CD8-positive, alpha-beta T cell (primary cell): ENCODE measurements at regions of chr19 and their contacts with region 1.

Region 1: DNA sequence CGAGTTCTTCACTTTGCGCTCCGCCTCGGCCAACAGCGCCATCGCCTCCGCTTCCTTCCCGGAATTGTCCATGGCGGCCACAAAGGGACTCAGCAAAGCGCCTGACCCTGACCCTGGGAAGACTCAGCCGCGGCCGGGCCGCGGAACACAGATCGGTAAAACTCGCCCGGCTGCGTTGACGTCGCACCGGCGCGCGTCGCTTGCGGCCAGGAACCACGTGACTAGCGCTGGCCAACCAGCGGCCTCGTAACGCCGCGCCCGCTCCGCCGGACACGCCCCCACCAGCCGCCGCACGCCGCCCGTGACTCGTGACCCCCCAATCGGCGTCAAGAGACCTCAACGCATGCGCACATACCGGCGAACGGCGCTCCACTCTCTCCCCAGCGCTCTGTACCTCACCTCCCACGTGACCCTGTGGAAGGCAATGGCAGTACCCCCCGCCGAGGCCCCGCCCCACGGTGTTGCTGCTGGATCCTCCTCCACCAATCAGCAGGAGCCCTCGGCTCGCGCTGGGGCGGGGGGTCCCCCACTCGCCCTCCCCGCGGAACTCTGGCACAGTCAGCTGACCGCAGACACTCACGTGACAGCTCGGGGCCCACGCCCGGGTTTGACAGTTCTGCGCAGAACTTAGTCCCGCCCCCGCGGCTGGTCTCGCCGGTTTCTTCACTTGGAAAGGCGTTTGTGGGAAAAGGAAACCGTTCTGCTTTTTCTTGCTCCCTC is at the start of gene NAPA:
- DNase-seq: peak; percentile 100
- ATAC-seq: peak; percentile 94
- H3K4me3 ChIP-seq: peak within 1 kb of the TSS; percentile 84 to 100
- H3K4me3 Mint-ChIP-seq: peak within 1 kb of the TSS; percentile 97
- H3K27ac ChIP-seq: peak within 1 kb of the TSS; percentile 93 to 100
- H3K27ac Mint-ChIP-seq: peak within 1 kb of the TSS; percentile 98
- H3K4me1 ChIP-seq: peaks cover 82% of the 10 kb centered on the region
- H3K4me1 Mint-ChIP-seq: peaks cover 88% of the 10 kb centered on the region
- H3K27me3 ChIP-seq: no peaks in the 10 kb centered on the region
- H3K27me3 Mint-ChIP-seq: no peaks in the 10 kb centered on the region
- CTCF ChIP-seq: no peak
- total RNA-seq, gene NAPA: 172 to 188 TPM

Region 2: DNA sequence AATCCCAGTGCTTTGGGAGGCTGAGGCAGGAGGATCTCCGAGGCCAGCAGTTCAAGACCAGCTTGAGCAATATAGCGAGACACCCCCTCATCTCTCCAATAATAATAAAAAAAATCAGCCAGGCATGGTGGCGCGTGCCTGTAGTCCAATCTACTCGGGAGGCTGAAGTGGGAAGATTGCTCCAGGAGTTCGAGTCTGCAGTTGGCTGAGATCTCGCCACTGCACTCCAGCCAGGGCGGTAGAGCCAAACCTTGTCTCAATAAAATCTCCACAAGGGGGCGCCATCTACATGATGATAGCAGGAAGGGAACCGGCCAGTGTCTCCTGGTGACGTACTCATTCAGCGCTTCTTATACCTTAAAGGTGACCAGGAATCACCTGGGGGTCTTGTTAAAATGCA is 219.0 kb before region 1 on chr19:
- CTCF ChIA-PET with region 1: no interaction called
- POLR2A ChIA-PET with region 1: no interaction called
- intact Hi-C with region 1: loop called in 1 of 2 experiments (anchors 5 kb)
- DNase-seq: peak; percentile 41 to 87 (median 76)
- ATAC-seq: peak; percentile 91
- H3K4me3 ChIP-seq: no peak overlapping the region
- H3K4me3 Mint-ChIP-seq: no peak overlapping the region
- H3K27ac ChIP-seq: no peak overlapping the region
- H3K27ac Mint-ChIP-seq: no peak overlapping the region
- H3K4me1 ChIP-seq: no peaks in the 10 kb centered on the region
- H3K4me1 Mint-ChIP-seq: peaks cover 3% of the 10 kb centered on the region
- H3K27me3 ChIP-seq: no peaks in the 10 kb centered on the region
- H3K27me3 Mint-ChIP-seq: no peaks in the 10 kb centered on the region
- CTCF ChIP-seq: peak; percentile 68

Region 3: DNA sequence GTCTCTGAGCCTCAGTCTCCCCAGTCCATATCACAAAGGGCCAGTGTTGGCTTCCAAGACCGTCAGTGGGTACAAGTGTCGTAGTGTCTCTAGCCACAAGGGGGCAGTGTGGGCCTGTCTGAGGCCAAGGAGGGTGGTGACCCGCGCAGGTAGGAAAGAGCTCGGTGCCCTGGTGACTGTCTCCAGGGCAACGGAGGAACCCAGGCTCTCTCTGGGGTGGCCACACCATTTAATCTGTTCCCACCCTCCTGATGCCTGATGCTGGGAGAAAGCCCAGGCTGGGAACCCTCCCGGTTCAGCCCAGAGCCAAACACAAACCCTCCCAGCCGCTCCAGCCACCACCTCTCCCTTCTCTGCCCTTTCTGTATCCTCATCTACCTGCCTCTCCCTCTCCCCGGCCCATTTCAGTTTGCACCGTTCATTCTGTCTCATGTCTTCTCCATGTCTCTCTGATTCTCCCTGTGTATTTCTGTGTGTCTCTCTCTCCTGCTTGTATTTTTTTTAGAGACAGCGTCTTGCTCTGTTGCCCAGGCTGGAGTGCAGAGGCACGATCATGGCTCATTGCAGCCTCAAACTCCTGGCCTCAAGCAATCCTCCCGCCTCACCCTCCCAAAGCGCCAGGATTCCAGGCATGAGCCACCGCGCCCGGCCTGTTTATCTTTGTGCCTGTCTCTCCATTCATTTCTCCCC is 78.2 kb before region 1 on chr19:
- CTCF ChIA-PET with region 1: interaction called, 7 read pairs
- POLR2A ChIA-PET with region 1: no interaction called
- intact Hi-C with region 1: loop called (anchors 1 kb)
- DNase-seq: peak; percentile 66 to 92 (median 85)
- ATAC-seq: peak; percentile 96
- H3K4me3 ChIP-seq: no peak overlapping the region
- H3K4me3 Mint-ChIP-seq: no peak overlapping the region
- H3K27ac ChIP-seq: no peak overlapping the region
- H3K27ac Mint-ChIP-seq: no peak overlapping the region
- H3K4me1 ChIP-seq: no peaks in the 10 kb centered on the region
- H3K4me1 Mint-ChIP-seq: peaks cover 11% of the 10 kb centered on the region
- H3K27me3 ChIP-seq: peaks cover 7 to 18% of the 10 kb centered on the region in 2 experiments
- H3K27me3 Mint-ChIP-seq: peaks cover 60% of the 10 kb centered on the region
- CTCF ChIP-seq: peak; percentile 86

Region 4: GRCh38 chr19:47531640-47532387 is 16.8 kb after region 1 on chr19:
- CTCF ChIA-PET with region 1: interaction called, 14 read pairs
- POLR2A ChIA-PET with region 1: no interaction called
- intact Hi-C with region 1: no loop called
- DNase-seq: no peak
- ATAC-seq: no peak
- H3K4me3 ChIP-seq: no peak overlapping the region
- H3K4me3 Mint-ChIP-seq: no peak overlapping the region
- H3K27ac ChIP-seq: no peak overlapping the region
- H3K27ac Mint-ChIP-seq: no peak overlapping the region
- H3K4me1 ChIP-seq: no peaks in the 10 kb centered on the region
- H3K4me1 Mint-ChIP-seq: no peaks in the 10 kb centered on the region
- H3K27me3 ChIP-seq: peaks cover 0 to 4% of the 10 kb centered on the region in 2 experiments
- H3K27me3 Mint-ChIP-seq: no peaks in the 10 kb centered on the region
- CTCF ChIP-seq: no peak

Region 5: GRCh38 chr19:47573071-47574026 is 58.3 kb after region 1 on chr19 and contains the start of gene ZNF541:
- CTCF ChIA-PET with region 1: interaction called, 7 read pairs
- POLR2A ChIA-PET with region 1: no interaction called
- intact Hi-C with region 1: loop called (anchors 1 kb)
- DNase-seq: peak; percentile 72 to 94 (median 85)
- ATAC-seq: peak; percentile 89
- H3K4me3 ChIP-seq: peak within 1 kb of the TSS; percentile 60
- H3K4me3 Mint-ChIP-seq: peak within 1 kb of the TSS; percentile 72
- H3K27ac ChIP-seq: peak within 1 kb of the TSS in 1 of 2 experiments; percentile 53
- H3K27ac Mint-ChIP-seq: no peak within 1 kb of the TSS
- H3K4me1 ChIP-seq: peaks cover 32% of the 10 kb centered on the region
- H3K4me1 Mint-ChIP-seq: peaks cover 37% of the 10 kb centered on the region
- H3K27me3 ChIP-seq: no peaks in the 10 kb centered on the region
- H3K27me3 Mint-ChIP-seq: no peaks in the 10 kb centered on the region
- CTCF ChIP-seq: no peak
- total RNA-seq, gene ZNF541: 0.33 to 1.5 TPM

Region 6: DNA sequence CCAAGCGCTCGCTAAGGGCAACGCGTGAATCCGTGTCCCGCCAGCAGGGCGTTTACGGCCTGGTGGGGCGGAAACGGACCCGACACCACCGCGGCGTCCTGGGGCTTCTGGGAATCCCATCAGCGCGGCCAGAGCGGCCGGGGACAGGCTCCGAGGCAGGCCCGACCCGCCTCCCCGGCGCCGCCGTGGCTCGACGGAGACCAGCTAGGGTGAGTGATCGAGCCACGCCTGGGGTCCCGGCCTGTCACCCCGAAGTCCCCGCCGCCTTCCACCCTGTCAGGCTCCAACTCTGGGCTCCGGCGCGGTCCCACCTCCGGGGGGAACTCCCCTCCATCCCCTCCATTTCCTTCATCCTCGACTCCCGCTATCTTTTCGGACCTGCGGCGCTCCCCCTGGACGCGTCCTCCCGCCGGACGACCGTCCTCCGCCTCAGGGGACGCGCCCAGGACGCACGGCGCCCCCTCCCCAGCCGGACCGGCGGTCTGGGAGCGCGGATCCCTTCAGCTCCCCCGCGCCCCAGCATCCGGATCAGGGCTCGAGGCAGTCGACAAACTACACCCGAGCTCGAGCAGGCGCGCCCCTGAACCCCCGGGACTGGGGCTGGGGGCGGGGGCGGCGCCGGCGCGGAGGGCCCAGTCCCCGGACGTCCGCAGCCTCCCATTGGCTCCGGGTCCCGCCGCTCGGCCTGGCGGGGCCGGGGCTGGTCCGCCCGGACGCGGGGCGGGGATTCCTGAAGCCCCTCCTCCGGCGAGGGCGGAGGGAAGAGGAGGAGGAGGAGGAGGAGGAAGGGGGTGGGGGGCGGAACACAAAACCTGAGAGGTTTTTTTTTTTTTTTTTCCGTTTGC is 93.3 kb after region 1 on chr19:
- CTCF ChIA-PET with region 1: interaction called, 16 read pairs
- POLR2A ChIA-PET with region 1: interaction called, 21 read pairs
- intact Hi-C with region 1: loop called (anchors 1 kb)
- DNase-seq: peak; percentile 93 to 98 (median 95)
- ATAC-seq: peak; percentile 87
- H3K4me3 ChIP-seq: peak overlapping the region; percentile 84 to 99
- H3K4me3 Mint-ChIP-seq: peak overlapping the region; percentile 84
- H3K27ac ChIP-seq: peak overlapping the region; percentile 82 to 85
- H3K27ac Mint-ChIP-seq: peak overlapping the region; percentile 77
- H3K4me1 ChIP-seq: peaks cover 17% of the 10 kb centered on the region
- H3K4me1 Mint-ChIP-seq: peaks cover 29% of the 10 kb centered on the region
- H3K27me3 ChIP-seq: no peaks in the 10 kb centered on the region
- H3K27me3 Mint-ChIP-seq: no peaks in the 10 kb centered on the region
- CTCF ChIP-seq: no peak

Region 7: DNA sequence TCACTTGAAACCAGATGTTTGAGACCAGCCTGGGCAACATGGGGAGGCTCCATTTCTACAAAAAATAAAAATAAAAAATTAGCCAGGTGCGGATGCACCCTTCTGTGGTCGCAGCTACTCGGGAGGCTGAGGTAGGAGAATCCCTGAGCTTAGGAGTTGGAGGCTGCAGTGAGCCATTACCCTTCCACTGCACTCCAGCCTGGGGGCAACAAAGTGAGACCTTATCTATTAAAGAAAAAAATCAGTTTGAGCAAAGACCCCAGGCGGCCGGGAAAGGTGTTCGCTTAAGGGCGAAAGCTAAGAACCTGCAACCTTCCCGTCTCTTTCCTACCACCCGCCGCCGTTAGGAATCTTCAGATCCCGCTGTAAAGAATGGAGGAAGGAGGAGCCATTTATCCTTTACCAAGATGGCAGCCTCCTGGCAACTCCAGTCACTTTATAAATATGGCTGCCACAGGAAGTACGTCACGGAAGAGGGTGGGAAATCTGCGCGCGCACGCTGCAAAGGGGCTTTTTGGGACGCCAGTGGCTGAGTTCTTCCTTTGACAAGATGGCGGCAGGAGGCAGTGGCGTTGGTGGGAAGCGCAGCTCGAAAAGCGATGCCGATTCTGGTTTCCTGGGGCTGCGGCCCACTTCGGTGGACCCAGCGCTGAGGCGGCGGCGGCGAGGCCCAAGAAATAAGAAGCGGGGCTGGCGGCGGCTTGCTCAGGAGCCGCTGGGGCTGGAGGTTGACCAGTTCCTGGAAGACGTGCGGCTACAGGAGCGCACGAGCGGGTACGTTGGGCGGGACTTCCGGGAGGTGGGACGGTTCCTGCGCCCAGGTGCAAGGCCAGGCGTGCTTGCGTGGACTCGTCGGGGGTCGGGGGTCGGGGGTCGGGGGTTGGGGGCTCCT is 230.2 kb after region 1 on chr19 and contains the start of gene NOP53:
- CTCF ChIA-PET with region 1: no interaction called
- POLR2A ChIA-PET with region 1: no interaction called
- intact Hi-C with region 1: loop called (anchors 1 kb)
- DNase-seq: peak; percentile 91 to 99 (median 97)
- ATAC-seq: peak; percentile 82
- H3K4me3 ChIP-seq: peak within 1 kb of the TSS; percentile 64 to 78
- H3K4me3 Mint-ChIP-seq: peak within 1 kb of the TSS; percentile 99
- H3K27ac ChIP-seq: peak within 1 kb of the TSS; percentile 85 to 96
- H3K27ac Mint-ChIP-seq: peak within 1 kb of the TSS; percentile 100
- H3K4me1 ChIP-seq: peaks cover 60% of the 10 kb centered on the region
- H3K4me1 Mint-ChIP-seq: peaks cover 39% of the 10 kb centered on the region
- H3K27me3 ChIP-seq: no peaks in the 10 kb centered on the region
- H3K27me3 Mint-ChIP-seq: no peaks in the 10 kb centered on the region
- CTCF ChIP-seq: no peak
- total RNA-seq, gene NOP53: 924 to 926 TPM